ENCODE measurements at regions of chr5 and their contacts with region 1.

Region 1: DNA sequence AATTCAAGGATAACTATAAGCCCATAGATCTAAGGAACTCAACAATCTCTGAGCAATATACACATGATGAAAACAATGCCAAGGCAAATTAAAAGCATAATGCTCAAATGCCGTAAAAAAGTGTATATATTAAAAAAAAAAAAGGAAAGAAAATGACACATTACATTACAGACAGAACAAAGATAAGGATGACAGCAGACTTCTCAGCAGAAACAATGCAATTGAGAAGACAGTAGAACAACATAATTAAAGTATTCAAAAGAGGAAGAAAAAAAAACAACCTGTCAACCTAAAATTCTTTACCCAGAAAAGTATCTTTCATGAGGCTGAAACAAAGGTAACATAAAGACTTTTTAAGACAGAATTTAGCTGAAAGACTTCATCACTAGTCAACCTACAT is 591.7 kb downstream of the ZNF608 start:
- DNase-seq: no peak
- H3K4me3 ChIP-seq: no peak overlapping the region
- H3K27ac ChIP-seq: no peak overlapping the region
- H3K4me1 ChIP-seq: no peaks in the 10 kb centered on the region
- H3K27me3 ChIP-seq: no peaks in the 10 kb centered on the region
- CTCF ChIP-seq: no peak
- POLR2A ChIP-seq: no peak

Region 2: GRCh38 chr5:123949806-123950340 is 204.8 kb before region 1 on chr5:
- intact Hi-C with region 1: loop called (anchors 5 kb)
- DNase-seq: no peak
- H3K4me3 ChIP-seq: no peak overlapping the region
- H3K27ac ChIP-seq: no peak overlapping the region
- H3K4me1 ChIP-seq: no peaks in the 10 kb centered on the region
- H3K27me3 ChIP-seq: no peaks in the 10 kb centered on the region
- CTCF ChIP-seq: no peak
- POLR2A ChIP-seq: no peak